ENCODE measurements at regions of chr18 and their contacts with region 1.

Region 1: DNA sequence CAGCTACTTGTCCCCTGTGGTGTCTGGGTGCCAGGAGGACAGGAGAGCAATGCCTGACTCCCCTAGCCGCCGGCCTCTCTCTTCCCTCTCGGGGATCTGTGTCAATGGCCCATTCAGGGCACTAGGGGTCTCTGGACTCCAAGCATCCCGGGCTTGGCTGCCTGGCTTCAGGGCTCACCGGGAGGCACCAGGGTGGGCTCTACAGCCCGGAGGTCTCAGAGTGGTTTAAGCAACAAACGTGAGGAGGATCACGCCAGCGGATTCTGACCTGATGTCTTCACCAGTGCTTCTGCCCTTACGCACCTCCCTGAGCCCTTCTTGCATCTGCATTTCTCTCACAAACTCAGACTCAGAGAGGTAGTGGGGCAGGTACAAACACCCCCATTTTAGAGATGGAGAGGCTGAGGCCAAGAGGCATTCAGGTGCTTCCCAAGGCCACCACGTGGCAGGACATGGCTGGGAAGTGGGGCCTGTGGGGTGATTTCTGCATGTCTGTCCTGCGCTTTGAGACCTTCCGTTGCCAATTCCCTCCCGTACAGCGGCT is 243.0 kb downstream of the CELF4 start:
- DNase-seq: peak; percentile 29 to 85
- H3K4me3 ChIP-seq: no peak overlapping the region
- H3K27ac ChIP-seq: no peak overlapping the region
- H3K4me1 ChIP-seq: peaks cover 0 to 10% (median 5%) of the 10 kb centered on the region in 4 experiments; a peak in 6 of 7 replicates
- H3K27me3 ChIP-seq: no peaks in the 10 kb centered on the region
- CTCF ChIP-seq: peak in 2 of 3 experiments; percentile 83 to 92; a peak in 3 of 4 replicates
- EP300 ChIP-seq: no peak
- POLR2A ChIP-seq: no peak
- RAD21 ChIP-seq: peak; percentile 87 to 92

Region 2: GRCh38 chr18:37270038-37270665 is 52.4 kb before region 1 on chr18:
- CTCF ChIA-PET with region 1: interaction called, 10 read pairs
- POLR2A ChIA-PET with region 1: no interaction called
- DNase-seq: peak in 1 of 2 experiments; percentile 85
- H3K4me3 ChIP-seq: no peak overlapping the region
- H3K27ac ChIP-seq: no peak overlapping the region
- H3K4me1 ChIP-seq: no peaks in the 10 kb centered on the region
- H3K27me3 ChIP-seq: no peaks in the 10 kb centered on the region
- CTCF ChIP-seq: no peak
- EP300 ChIP-seq: no peak
- POLR2A ChIP-seq: no peak
- RAD21 ChIP-seq: no peak

Region 3: DNA sequence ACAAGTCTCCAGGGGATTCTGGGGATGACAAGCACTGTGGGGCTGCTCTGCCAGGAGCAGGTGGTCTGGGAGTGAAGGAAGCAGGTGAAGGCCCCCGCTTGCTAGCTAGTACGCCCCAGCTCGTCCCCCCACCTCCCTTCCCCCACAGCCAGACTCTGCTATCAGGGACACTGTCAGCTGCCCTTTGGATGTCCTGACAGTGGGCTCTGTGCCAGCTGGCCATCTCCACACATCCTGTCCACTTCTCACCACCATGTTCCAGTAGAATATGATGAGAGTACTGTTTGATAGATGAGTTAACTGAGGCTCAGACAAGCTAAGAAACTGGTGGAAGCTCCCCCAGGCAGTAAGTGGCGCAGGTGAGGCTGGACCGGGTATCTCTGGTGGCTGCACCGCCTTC is 33.1 kb before region 1 on chr18:
- CTCF ChIA-PET with region 1: interaction called, 15 read pairs
- POLR2A ChIA-PET with region 1: no interaction called
- DNase-seq: no peak
- H3K4me3 ChIP-seq: no peak overlapping the region
- H3K27ac ChIP-seq: no peak overlapping the region
- H3K4me1 ChIP-seq: no peaks in the 10 kb centered on the region
- H3K27me3 ChIP-seq: no peaks in the 10 kb centered on the region; a peak in 1 of 7 replicates
- CTCF ChIP-seq: no peak
- EP300 ChIP-seq: no peak
- POLR2A ChIP-seq: no peak
- RAD21 ChIP-seq: no peak

Region 4: DNA sequence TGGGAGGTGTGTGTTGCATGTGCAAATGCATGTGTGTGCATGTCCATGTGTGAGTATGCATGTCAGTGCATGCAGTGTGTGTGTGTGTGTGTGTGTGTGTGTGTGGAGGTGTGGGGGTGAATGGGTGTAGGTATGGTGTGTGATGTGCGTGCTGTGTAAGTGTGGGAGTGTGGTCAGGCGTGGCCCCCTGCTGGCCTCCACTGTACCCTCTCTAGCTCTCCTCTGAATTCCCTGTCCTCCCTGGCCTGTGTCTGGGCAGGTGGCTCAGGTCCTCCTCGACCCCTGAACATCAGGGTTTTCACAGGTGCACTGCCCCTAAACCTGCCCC is 12.8 kb after region 1 on chr18:
- CTCF ChIA-PET with region 1: interaction called, 111 read pairs
- POLR2A ChIA-PET with region 1: interaction called, 3 read pairs
- DNase-seq: no peak
- H3K4me3 ChIP-seq: no peak overlapping the region
- H3K27ac ChIP-seq: no peak overlapping the region
- H3K4me1 ChIP-seq: peaks cover 0 to 4% (median 1%) of the 10 kb centered on the region in 4 experiments; a peak in 4 of 7 replicates
- H3K27me3 ChIP-seq: 0 out of 7 replicates have a peak, but pooled peaks cover 0 to 5% (median 0%) of the 10 kb centered on the region in 4 experiments
- CTCF ChIP-seq: peak; percentile 25 to 59 (median 44); a peak in 3 of 4 replicates
- EP300 ChIP-seq: no peak
- POLR2A ChIP-seq: no peak
- RAD21 ChIP-seq: peak; percentile 42 to 49

Region 5: DNA sequence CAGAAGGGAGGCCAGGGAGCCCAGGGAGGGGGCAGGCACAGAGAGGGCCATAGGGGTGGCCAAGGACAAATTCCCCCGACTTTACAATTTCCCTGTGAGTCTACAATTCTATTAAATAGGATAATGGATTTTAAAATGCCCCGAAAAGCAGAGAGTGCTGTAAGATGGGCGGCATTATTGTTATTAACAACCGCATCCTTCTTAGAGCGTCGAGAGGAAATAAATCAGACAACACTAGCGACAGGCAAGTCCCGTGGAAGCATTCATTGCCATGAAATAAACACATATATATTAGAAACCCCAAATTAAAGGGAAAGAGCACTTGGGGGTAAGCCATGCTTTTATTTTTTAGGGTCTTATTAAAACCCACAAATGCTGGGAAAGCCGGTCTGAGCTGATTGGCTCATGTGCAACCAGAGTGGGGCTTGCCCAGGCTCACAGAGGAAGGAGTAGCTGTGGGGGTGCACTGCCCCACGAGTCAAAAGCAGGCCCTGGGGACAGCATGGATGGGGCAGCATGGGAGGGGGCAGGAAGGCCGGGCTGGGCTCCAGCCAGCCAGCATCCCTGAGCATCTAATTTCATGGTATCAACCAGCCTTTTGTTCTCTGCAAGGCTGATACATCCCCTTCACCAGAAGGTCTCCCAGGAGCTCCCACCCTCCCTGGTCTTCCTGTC is 55.9 kb after region 1 on chr18:
- CTCF ChIA-PET with region 1: interaction called, 18 read pairs
- POLR2A ChIA-PET with region 1: no interaction called
- DNase-seq: no peak
- H3K4me3 ChIP-seq: no peak overlapping the region
- H3K27ac ChIP-seq: no peak overlapping the region
- H3K4me1 ChIP-seq: peaks cover 0 to 5% (median 2%) of the 10 kb centered on the region in 4 experiments; a peak in 2 of 7 replicates
- H3K27me3 ChIP-seq: peaks cover 0 to 2% (median 0%) of the 10 kb centered on the region in 4 experiments; a peak in 2 of 7 replicates
- CTCF ChIP-seq: no peak
- EP300 ChIP-seq: no peak
- POLR2A ChIP-seq: no peak
- RAD21 ChIP-seq: no peak

Measured in H1 (cell line).